ENCODE measurements at regions of chr21 and their contacts with region 1.

Region 1: DNA sequence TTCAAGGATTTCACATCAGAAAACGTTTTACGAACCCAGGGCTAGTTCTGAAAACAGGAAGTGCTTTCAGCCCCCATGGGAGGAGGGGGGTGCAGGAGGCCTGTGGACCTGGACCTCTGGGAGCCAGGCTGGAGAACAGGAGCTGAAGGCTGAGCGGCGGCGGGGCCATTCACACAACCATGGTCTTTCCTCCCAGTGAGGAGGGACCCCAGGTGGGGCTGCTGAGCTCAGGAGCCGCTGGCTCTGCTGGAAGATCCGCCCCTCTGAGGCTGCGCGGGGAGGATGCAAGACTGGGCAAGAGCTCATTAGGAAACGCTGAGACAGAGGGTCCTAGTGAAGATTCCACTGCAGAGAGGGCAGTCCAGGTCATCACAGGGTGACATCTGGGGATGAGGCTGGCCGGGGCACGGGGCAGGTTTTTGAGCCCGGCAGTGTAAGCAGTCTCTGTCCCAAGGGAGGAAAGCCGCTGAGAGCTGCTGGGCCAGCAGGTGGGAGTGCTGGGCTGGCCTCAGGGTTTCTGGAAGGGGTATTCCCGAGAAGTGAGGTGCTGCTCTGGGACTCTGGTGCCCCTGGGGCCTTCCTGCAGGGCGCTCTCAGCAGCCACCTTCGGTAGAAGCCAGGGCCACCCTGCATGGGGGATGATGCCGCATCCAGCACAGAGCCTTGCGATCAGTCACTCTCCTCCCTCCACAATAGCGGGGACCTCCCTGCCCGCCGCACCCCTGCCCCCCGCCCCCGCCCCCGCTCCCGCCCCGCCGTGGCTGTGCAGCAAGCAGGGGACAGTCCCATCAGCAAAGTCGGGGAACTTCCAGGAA is 7.5 kb downstream of the MX2 start:
- DNase-seq: peak; percentile 64
- ATAC-seq: peak; percentile 92
- H3K4me3 Mint-ChIP-seq: peak overlapping the region; percentile 68
- H3K27ac Mint-ChIP-seq: no peak overlapping the region
- H3K4me1 Mint-ChIP-seq: peaks cover 12% of the 10 kb centered on the region
- H3K27me3 Mint-ChIP-seq: no peaks in the 10 kb centered on the region; the same call in 1 of the 2 replicates
- CTCF ChIP-seq: no peak

Region 2: GRCh38 chr21:41086569-41086968 is 282.7 kb before region 1 on chr21:
- CTCF ChIA-PET with region 1: no interaction called
- POLR2A ChIA-PET with region 1: no interaction called
- DNase-seq: no peak
- ATAC-seq: no peak
- H3K4me3 Mint-ChIP-seq: no peak overlapping the region
- H3K27ac Mint-ChIP-seq: no peak overlapping the region
- H3K4me1 Mint-ChIP-seq: peaks cover 5% of the 10 kb centered on the region
- H3K27me3 Mint-ChIP-seq: no peaks in the 10 kb centered on the region
- CTCF ChIP-seq: no peak

Region 3: DNA sequence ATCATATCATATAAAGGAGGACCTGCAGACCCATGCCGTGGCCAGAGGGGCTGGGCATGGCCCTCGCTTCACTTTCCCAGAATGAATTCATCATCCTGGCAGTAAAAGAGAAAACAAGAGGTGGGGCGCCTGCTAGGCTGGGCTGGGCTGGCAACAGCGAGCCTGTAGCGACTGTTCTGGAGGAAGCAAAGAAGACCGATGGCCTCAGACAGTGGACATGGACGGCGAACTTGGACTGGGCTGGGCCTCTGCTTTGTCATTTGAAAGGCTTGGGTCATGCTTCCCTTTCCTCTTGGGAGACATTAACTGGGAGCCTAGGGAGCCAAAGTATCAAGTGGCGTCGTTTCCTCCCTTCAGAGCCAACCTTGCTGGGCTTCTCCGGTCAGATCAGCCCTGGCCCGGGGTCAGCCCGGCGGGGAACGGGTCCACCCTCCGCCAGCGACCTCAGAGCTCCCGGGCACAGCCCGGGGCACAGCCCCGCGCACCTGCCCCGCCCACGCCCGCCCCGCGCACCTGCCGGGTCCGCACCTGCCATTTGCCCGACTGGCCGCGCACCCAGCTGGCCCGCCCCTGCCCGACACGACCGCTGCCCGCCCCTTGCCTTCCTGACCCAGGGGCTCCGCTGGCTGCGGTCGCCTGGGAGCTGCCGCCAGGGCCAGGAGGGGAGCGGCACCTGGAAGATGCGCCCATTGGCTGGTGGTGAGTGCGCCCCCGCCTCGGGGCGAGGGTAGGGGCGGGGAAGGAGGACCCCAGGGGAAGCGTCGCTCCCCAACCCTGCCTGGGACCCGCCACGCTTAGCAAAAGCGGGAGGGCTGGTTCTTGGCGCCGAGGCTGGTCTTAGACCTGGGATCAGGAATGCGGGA is 52.9 kb before region 1 on chr21 and contains the start of gene FAM3B:
- CTCF ChIA-PET with region 1: interaction called, 10 read pairs
- POLR2A ChIA-PET with region 1: no interaction called
- DNase-seq: peak; percentile 80
- ATAC-seq: peak; percentile 93
- H3K4me3 Mint-ChIP-seq: peak within 1 kb of the TSS; percentile 78
- H3K27ac Mint-ChIP-seq: peak within 1 kb of the TSS; percentile 30
- H3K4me1 Mint-ChIP-seq: peaks cover 5% of the 10 kb centered on the region
- H3K27me3 Mint-ChIP-seq: peaks cover 24% of the 10 kb centered on the region
- CTCF ChIP-seq: no peak
- total RNA-seq, gene FAM3B: 1.4 to 3.6 TPM (median 3.0 TPM) in 3 replicates

Region 4: DNA sequence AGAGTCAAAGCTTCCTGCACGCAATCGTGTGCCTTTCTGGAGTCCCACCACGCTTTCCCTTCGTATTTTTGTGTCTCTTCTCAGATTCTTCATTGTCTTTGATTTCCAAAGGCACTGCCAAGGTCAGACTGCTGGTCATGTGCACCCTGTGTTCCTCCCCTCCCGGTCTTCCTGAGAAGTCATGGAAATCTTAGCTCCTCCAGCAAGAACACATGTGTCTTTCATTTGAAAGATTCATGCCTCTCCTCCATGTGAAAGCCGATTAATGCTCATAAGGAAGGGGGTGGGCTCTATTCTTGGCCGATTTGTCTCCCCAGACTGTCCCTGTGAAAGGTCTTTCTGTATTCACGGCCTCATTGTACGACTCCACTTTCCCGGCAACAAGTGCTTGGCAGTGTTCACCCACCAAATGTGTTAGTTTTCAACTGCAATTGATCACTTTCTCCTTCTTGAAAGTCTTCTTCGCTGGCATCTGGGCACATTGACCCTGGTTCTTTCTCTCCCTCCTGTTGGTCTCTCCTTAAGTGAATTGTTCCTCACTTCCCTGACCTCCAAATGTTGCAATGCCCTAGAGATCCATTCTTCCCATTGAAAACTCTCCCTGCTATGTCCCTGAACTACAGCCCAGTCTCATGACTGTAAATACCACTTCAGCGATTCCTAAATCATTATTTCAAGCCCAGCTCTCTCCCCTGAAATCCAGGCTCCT is 17.9 kb after region 1 on chr21:
- CTCF ChIA-PET with region 1: no interaction called
- POLR2A ChIA-PET with region 1: no interaction called
- DNase-seq: no peak
- ATAC-seq: no peak
- H3K4me3 Mint-ChIP-seq: no peak overlapping the region
- H3K27ac Mint-ChIP-seq: no peak overlapping the region
- H3K4me1 Mint-ChIP-seq: no peaks in the 10 kb centered on the region
- H3K27me3 Mint-ChIP-seq: peaks cover 3% of the 10 kb centered on the region; the same call in 1 of the 2 replicates
- CTCF ChIP-seq: no peak

Region 5: DNA sequence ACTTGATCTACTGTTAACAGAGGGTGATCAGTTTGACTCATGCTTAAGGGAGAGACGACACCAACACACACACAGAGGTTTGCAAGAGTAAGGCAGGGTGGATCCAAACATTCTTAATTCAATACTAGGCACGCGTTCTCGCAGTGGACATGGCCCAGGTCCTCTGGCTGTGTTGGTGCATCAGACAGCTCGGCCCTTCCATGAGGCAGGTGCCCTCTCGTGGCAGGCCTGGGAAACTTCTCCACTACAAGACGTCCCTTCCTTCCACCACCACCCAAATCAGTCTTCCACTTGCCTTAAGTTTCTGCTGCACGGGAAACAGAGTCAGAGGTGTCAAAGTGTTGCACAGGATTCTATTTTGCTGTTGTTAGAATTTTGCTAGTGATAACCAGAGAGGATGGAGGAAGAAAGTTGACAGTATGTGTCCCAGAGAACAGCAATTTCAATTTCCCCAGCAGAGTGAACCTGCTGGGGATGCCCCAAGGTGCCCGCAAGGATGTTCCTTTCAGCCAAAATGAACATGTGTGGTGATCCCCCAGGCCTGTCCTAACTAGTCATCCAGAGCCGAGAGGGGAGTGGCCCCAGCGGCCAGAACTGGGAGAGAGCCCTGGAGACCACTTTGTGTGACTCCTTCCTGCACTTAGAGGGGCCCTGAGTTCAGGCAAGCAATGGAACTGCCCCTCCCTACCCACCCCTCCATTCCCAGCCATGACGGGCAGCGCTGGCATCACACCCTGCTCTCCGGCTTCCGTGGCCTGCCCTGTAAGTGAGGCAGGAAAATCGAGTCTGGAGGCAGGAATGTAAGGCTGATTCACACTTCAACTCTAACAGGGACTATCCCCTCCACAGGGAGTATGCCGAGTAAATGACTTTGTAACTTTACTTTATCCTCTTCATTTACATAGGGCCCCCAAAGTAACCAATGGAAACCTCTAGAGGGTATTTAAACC is 91.5 kb after region 1 on chr21:
- CTCF ChIA-PET with region 1: interaction called, 22 read pairs
- POLR2A ChIA-PET with region 1: no interaction called
- DNase-seq: peak; percentile 70
- ATAC-seq: peak; percentile 93
- H3K4me3 Mint-ChIP-seq: no peak overlapping the region
- H3K27ac Mint-ChIP-seq: no peak overlapping the region
- H3K4me1 Mint-ChIP-seq: peaks cover 17% of the 10 kb centered on the region
- H3K27me3 Mint-ChIP-seq: no peaks in the 10 kb centered on the region; the same call in 1 of the 2 replicates
- CTCF ChIP-seq: no peak

Measured in WTC11 (cell line).